B cell (primary cell): ENCODE measurements at regions of chr5 and their contacts with region 1.

Region 1: GRCh38 chr5:112511920-112512319 is 92.8 kb upstream of the EPB41L4A start:
- DNase-seq: no peak
- ATAC-seq: no peak
- H3K4me3 ChIP-seq: no peak overlapping the region
- H3K4me3 Mint-ChIP-seq: no peak overlapping the region
- H3K27ac ChIP-seq: no peak overlapping the region
- H3K27ac Mint-ChIP-seq: no peak overlapping the region
- H3K4me1 ChIP-seq: no peaks in the 10 kb centered on the region
- H3K4me1 Mint-ChIP-seq: peaks cover 5% of the 10 kb centered on the region
- H3K27me3 ChIP-seq: no peaks in the 10 kb centered on the region
- H3K27me3 Mint-ChIP-seq: no peaks in the 10 kb centered on the region
- CTCF ChIP-seq: no peak

Region 2: DNA sequence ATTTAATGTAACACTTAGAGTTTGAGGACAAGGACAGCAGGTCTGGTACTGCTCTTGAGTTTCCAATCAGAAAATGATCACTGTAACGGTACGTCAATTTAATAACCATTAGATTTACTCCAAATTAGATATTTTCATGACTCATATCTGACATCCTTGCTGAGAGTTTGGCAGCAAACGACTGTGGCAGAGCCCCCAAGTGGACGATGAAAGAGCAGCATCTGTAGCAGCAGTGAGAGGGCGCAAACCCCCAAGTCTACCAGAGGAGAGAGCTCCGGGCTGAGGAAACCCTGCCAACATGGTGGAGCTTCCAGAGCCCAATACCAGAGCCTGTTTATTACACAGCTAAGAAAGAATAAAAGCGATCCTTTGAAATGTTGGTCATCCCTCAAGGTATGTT is 19.6 kb before region 1 on chr5:
- CTCF ChIA-PET with region 1: interaction called, 11 read pairs
- POLR2A ChIA-PET with region 1: no interaction called
- intact Hi-C with region 1: no loop called
- DNase-seq: peak; percentile 64
- ATAC-seq: peak; percentile 91
- H3K4me3 ChIP-seq: no peak overlapping the region
- H3K4me3 Mint-ChIP-seq: no peak overlapping the region
- H3K27ac ChIP-seq: no peak overlapping the region
- H3K27ac Mint-ChIP-seq: no peak overlapping the region
- H3K4me1 ChIP-seq: peaks cover 4% of the 10 kb centered on the region in 2 donors
- H3K4me1 Mint-ChIP-seq: peaks cover 7% of the 10 kb centered on the region
- H3K27me3 ChIP-seq: no peaks in the 10 kb centered on the region
- H3K27me3 Mint-ChIP-seq: peaks cover 10% of the 10 kb centered on the region
- CTCF ChIP-seq: peak; percentile 63